HEK293 (cell line): ENCODE measurements at regions of chr20 and their contacts with region 1.

Region 1: GRCh38 chr20:45011108-45011526 is 44.8 kb downstream of the STK4 start:
- H3K4me3 ChIP-seq: no peak overlapping the region
- H3K27ac ChIP-seq: no peak overlapping the region
- H3K4me1 ChIP-seq: peaks cover 16% of the 10 kb centered on the region
- CTCF ChIP-seq: peak; percentile 56; the same call in 1 of the 2 replicates

Region 2: DNA sequence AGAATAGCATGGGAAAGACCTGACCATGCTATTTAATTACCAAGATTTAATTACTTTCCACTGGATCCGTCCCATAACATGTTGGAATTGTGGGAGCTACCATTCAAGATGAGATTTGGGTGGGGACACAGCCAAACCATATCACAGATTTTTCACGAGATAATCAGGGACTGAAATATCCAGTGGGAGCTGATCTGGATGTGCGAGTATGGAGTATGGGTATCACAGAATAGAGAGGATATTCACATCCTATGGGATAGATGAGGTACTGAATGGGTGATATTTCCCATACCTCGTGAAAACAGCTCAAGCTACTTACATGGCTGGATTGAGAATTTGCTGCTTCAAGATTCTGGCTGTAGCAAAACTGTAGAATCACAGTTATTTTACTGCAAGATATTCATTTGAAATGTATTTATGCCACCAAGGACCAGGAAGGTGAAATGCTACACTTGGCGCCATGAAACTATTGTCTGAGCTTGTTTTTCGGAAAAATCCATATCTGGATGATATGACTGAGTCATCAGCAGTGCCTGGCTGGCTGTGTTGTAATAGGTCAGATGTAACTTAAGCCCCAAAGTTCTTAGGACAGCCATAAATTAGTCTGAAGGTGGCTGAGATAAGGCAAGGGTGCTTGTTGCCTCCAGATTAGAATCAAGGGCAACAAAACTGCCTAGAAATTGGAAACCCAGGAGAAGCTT is 60.0 kb after region 1 on chr20:
- CTCF ChIA-PET with region 1: interaction called, 10 read pairs
- POLR2A ChIA-PET with region 1: no interaction called
- H3K4me3 ChIP-seq: no peak overlapping the region
- H3K27ac ChIP-seq: no peak overlapping the region; the same call in 1 of the 2 replicates
- H3K4me1 ChIP-seq: no peaks in the 10 kb centered on the region
- CTCF ChIP-seq: no peak

Region 3: DNA sequence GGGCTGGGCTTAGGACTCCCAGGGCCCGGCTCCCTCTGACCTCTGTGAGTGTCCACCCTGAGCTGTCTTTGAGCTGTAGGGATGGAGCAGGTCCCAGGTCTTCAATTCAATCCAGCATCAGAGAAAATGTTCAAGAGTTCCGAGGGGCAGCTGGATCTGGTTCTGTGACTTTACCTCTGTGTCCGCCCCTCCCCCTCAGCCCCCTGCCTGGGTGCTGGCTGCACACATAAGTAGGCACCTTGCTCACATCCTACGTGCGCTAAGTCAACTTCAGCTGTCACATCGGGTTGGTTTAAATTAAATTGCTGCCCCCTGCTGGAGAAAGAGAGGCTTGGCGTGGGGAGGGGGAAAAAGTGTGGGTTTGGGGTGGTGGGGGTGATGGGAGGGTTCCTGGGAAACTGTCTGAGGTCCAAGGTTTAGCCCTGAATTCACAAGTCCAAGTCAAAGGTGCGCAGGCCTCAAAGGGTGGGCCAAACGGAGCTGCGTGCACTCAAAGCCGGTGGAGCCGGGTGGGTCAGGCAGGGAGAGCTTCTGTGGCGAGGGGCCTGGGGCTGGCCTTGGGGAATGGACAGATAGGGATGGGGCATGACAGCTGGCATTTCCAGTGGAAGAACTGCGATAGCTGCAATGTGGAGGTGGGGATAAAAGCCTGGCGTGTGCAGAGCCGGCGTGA is 100.8 kb after region 1 on chr20:
- CTCF ChIA-PET with region 1: interaction called, 32 read pairs
- POLR2A ChIA-PET with region 1: no interaction called
- H3K4me3 ChIP-seq: no peak overlapping the region
- H3K27ac ChIP-seq: no peak overlapping the region
- H3K4me1 ChIP-seq: no peaks in the 10 kb centered on the region
- CTCF ChIP-seq: no peak

Region 4: DNA sequence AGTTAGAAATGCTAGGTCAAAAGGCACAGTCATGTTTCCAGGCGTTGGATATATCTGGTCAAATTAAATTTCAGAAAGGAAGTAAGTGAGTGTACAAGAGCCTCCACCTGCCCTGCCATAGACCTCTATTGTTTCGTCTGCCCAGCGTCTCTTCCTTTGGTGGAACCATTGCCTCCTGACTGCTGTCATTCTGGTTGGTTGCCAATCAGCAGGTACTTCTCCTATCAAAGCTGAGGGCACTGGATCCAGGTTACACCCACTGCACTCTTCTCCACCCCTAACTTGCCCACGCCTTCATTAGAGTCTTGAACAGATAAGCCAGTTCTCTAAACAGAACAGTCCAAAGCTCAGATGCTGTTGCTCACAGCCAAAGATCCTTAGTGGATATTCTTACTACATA is 106.5 kb after region 1 on chr20:
- CTCF ChIA-PET with region 1: interaction called, 32 read pairs
- POLR2A ChIA-PET with region 1: no interaction called
- H3K4me3 ChIP-seq: no peak overlapping the region
- H3K27ac ChIP-seq: no peak overlapping the region
- H3K4me1 ChIP-seq: no peaks in the 10 kb centered on the region
- CTCF ChIP-seq: no peak